HCT116 (cell line): ENCODE measurements at regions of chr6 and their contacts with region 1.

Region 1: DNA sequence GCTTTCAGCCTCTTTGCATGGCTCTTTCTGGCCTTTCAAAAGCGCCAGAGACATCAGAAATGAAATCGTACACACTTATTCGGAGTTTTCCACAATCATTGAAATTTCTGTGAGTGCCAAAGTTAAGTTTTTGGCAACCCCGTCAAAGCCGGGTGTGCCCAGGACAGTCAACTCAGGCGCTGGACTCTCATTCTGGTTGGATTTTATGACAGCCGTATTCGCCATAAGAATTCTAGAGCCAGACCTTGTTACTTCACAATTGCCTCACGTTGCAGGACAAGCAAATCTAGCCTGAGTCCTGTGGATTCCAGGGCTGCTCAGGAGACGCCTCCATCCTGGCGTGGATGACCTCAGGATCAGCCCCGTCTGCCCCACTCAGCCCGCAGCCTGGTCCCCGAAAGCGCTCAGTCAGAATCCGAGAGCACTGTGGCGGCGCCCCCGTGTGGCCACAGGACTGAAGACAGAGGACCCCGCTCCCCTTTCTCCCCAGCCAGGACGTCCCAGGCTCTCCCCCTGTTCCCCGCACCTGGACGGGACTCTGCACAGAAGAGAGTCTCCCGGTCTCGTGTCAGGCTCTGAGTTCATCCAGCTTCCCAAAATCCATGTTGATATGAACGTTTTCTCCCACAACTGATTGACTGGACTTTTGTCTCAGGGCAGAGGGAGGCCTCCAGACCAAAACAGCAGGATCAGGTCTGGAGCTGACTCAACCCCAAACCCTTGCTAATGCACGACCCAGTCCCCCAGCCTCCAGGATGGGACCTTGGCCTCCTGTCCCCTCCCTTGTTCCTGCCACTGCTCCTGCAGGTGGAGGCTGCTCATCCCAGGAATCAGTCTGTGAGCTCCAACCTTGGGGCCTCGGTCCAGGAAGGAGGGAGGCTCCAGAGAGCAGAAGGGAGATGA is 38.2 kb downstream of the MICA start:
- DNase-seq: no peak
- ATAC-seq: peak; percentile 86
- H3K4me3 ChIP-seq: no peak overlapping the region
- H3K27ac ChIP-seq: no peak overlapping the region
- H3K4me1 ChIP-seq: peaks cover 2 to 10% of the 10 kb centered on the region in 2 experiments; a peak in 1 of 4 replicates
- H3K27me3 ChIP-seq: no peaks in the 10 kb centered on the region
- CTCF ChIP-seq: peak; percentile 60 to 68 (median 63)
- POLR2A ChIP-seq: no peak
- RAD21 ChIP-seq: peak; percentile 80

Region 2: DNA sequence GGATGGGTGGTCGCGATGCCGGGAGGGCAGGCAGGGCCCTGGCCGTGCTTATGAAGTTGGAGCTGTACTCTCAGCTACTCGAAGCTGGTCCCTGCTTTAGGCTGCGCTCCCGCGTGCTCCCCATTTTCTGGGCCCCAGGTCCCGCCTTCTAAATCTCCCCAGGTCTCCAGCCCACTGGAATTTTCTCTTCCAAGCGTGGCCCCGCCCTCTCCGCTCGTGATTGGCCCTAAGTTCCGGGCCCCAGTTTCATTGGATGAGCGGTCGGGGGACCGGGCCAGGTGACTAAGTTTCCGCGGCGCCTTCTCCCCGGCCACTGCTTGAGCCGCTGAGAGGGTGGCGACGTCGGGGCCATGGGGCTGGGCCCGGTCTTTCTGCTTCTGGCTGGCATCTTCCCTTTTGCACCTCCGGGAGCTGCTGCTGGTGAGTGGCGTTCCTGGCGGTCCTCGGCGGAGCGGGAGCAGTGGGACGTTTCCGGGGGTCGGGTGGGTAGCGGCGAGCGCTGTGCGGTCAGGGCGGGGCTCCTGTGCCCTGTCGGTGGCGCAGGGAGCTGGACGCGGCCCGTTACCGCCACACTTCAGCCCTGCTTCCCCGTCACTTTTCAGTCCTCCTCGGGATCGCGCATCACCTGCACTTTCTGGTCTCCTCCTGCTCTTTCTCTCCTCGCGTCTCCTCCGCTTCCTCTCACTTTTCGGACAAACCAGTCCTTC is 38.2 kb before region 1 on chr6 and contains the start of gene MICA:
- CTCF ChIA-PET with region 1: interaction called, 71 read pairs
- POLR2A ChIA-PET with region 1: interaction called, 7 read pairs
- RAD21 ChIA-PET with region 1: interaction called, 5 to 12 read pairs
- intact Hi-C with region 1: loop called (anchors 1 kb)
- DNase-seq: peak; percentile 79
- ATAC-seq: peak; percentile 81
- H3K4me3 ChIP-seq: peak within 1 kb of the TSS; percentile 57 to 94
- H3K27ac ChIP-seq: peak within 1 kb of the TSS; percentile 93
- H3K4me1 ChIP-seq: peaks cover 26 to 50% of the 10 kb centered on the region in 2 experiments
- H3K27me3 ChIP-seq: no peaks in the 10 kb centered on the region
- CTCF ChIP-seq: no peak
- POLR2A ChIP-seq: peak; percentile 26
- RAD21 ChIP-seq: no peak
- total RNA-seq, gene MICA: 24.1 TPM

Region 3: GRCh38 chr6:31462964-31463870 is 21.6 kb after region 1 on chr6:
- CTCF ChIA-PET with region 1: interaction called, 7 read pairs
- POLR2A ChIA-PET with region 1: interaction called, 11 read pairs
- RAD21 ChIA-PET with region 1: no interaction called
- intact Hi-C with region 1: no loop called
- DNase-seq: peak; percentile 93
- ATAC-seq: peak; percentile 99
- H3K4me3 ChIP-seq: peak overlapping the region; percentile 39 to 56
- H3K27ac ChIP-seq: peak overlapping the region; percentile 18; the same call in 1 of the 2 replicates
- H3K4me1 ChIP-seq: peaks cover 8 to 20% of the 10 kb centered on the region in 2 experiments
- H3K27me3 ChIP-seq: no peaks in the 10 kb centered on the region
- CTCF ChIP-seq: no peak
- POLR2A ChIP-seq: peak; percentile 57
- RAD21 ChIP-seq: no peak